ENCODE measurements at regions of chr17 and their contacts with region 1.

Region 1: GRCh38 chr17:20009302-20010098 is at the start of gene SPECC1:
- DNase-seq: peak; percentile 73 to 78
- H3K4me3 ChIP-seq: peak within 1 kb of the TSS; percentile 36 to 74 (median 54)
- H3K27ac ChIP-seq: peak within 1 kb of the TSS; percentile 40 to 76 (median 66)
- H3K4me1 ChIP-seq: peaks cover 0 to 3% of the 10 kb centered on the region in 2 donors
- H3K27me3 ChIP-seq: no peaks in the 10 kb centered on the region
- CTCF ChIP-seq: peak in 5 of 6 experiments; percentile 91 to 100 (median 96)
- POLR2A ChIP-seq: peak in 1 of 2 donors; percentile 36
- total RNA-seq, gene SPECC1: 19.8 to 41.5 (median 24.4) TPM

Region 2: DNA sequence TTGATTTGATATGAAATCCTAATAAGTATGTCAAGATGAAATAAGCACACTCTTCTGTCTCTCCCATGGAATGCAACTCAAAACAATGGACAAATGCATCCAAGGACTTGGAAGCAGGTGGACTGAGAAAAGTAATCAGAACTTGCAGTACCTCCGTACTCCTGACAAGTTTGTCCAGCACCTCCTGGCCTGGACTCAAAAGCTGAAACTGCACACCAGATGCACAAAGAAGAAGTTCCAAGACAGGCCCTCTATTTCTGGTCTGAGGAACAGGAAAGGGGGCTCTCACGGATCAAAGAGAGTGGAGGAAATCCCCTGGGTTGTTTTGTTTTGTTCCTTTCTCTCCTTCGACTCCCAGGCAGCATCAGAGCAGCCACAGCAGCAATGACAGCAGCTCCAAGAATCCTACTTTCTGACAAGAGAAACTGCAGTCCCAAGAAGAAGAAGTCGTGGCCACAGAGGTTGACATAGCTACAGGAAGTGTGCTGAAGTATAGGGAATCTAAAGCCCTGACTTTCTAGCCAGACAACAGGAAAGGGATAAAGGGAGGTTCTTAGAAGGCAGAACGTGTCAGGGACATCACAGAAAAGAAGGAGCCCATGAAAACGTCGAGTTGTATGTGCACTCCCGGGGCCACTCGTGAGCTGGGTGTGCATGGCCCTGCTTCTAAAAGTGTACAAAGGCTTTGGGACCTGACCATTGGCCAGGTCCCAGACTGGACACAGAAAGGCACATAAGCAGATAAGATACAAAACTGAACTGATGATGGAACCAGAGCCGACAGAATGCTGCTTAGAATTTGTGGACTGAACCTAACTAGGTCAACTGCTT is 61.2 kb before region 1 on chr17:
- intact Hi-C with region 1: no loop called
- DNase-seq: peak; percentile 65 to 70
- H3K4me3 ChIP-seq: no peak overlapping the region
- H3K27ac ChIP-seq: peak overlapping the region; percentile 7 to 53 (median 33)
- H3K4me1 ChIP-seq: peaks cover 23 to 48% of the 10 kb centered on the region in 2 donors
- H3K27me3 ChIP-seq: no peaks in the 10 kb centered on the region
- CTCF ChIP-seq: peak in 4 of 6 experiments; percentile 17 to 35 (median 28)
- POLR2A ChIP-seq: no peak

Region 3: DNA sequence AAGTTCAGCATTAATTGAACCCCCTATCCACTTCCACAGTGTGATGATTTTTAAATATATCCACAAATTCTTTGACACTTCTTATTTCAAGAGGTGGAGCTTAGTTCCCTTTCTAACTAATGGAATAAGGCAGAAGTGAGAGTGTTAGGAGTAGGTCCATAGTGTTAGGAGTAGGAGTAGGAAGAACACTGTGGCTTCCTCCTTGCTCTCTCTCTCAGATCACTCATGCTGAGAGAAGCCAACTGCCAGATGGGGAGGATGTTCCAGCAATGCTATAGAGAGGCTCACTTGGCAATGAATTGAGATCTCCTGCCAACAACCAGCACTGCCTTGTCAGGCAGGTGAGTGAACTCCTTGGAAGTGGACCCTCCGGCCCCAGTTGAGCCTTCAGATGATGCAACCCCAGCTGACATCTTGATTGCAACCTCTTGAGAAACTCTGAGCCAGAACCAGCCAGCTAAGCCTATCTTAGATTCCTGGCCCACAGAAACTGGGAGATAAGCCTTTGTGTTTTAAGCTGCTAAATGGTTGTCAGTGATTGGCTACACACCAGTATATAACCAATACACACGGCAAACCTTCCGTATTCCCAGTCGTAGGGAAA is 44.0 kb after region 1 on chr17:
- intact Hi-C with region 1: loop called (anchors 5 kb)
- DNase-seq: no peak
- H3K4me3 ChIP-seq: no peak overlapping the region
- H3K27ac ChIP-seq: no peak overlapping the region
- H3K4me1 ChIP-seq: no peaks in the 10 kb centered on the region
- H3K27me3 ChIP-seq: no peaks in the 10 kb centered on the region
- CTCF ChIP-seq: no peak
- POLR2A ChIP-seq: no peak

Region 4: DNA sequence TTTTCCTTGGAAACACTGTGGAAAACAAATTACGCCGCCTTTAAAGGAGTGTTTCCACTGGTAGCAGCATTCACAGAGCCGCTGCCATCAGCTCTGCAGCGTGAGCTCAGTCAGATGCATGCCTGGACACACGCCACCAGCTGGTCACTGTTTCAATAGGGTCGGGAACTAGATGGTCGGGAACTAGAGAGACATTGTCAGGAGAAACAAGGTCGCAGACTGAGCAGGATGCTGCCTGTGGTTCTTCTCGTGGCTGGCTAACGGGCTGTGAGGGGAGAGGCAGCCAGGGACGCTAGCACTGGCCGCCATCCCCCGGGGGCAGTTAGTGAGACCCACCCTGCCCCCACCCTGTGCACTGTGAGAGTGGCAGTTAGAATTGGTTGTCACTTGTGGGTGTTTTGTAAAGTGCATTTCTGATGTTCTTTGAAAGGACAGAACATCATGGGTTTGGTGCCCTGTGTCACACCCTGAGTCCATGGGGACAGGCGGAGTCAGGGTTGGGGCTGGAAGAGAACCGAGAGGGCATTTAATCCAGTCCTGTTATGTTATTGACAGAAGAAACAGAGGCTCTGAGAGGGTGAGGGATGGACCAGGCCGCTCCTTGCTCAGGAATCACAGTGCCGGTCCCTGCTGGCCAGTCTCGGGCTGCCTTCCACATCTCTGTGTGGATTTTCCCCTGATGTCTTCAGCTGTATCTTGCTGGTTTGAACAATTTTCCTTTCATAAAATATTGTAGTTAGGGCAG is 86.0 kb after region 1 on chr17:
- intact Hi-C with region 1: loop called (anchors 10 kb)
- DNase-seq: peak; percentile 50 to 70
- H3K4me3 ChIP-seq: no peak overlapping the region
- H3K27ac ChIP-seq: peak overlapping the region; percentile 9 to 55 (median 16)
- H3K4me1 ChIP-seq: peaks cover 0 to 5% of the 10 kb centered on the region in 2 donors
- H3K27me3 ChIP-seq: no peaks in the 10 kb centered on the region
- CTCF ChIP-seq: peak in 4 of 6 experiments; percentile 7 to 38 (median 33)
- POLR2A ChIP-seq: no peak